H1 (cell line): ENCODE measurements at regions of chr3 and their contacts with region 1.

Region 1: DNA sequence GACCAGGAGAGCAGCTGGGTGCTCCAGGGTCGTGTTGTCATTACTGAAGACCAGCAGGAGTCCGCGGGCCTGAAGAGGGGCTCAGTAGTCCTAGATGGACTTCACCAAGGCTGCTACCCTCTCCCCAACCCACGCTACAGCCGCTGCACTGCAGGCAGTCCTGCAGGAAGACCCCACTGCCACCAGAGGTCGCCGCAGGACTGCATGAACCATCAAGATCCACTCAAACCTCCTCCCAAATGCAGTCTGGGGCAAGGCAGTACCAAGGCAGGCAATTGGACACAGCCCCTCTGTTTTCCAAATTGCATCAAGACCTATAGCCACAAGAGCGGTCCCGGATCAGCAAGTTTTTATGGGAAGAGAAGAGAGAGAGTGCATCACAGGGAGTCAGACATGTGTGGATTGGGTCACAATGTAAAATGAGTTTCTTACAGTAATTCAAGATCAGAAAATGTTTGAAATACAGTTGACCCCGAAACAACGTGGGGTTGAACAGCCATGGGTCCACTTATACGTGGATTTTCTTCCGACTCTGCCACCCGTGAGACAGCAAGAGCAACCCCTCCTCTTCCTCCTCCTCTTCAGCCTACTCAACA is 46.7 kb downstream of the DZIP1L start:
- DNase-seq: peak; percentile 64 to 89
- H3K4me3 ChIP-seq: no peak overlapping the region
- H3K27ac ChIP-seq: no peak overlapping the region
- H3K4me1 ChIP-seq: peaks cover 1 to 5% (median 3%) of the 10 kb centered on the region in 4 experiments; a peak in 3 of 7 replicates
- H3K27me3 ChIP-seq: no peaks in the 10 kb centered on the region
- CTCF ChIP-seq: peak; percentile 97 to 100 (median 99)
- EP300 ChIP-seq: no peak
- POLR2A ChIP-seq: no peak
- RAD21 ChIP-seq: peak; percentile 99 to 100

Region 2: GRCh38 chr3:138089091-138089490 is 20.4 kb after region 1 on chr3:
- CTCF ChIA-PET with region 1: interaction called, 18 read pairs
- POLR2A ChIA-PET with region 1: interaction called, 3 read pairs
- DNase-seq: no peak
- H3K4me3 ChIP-seq: no peak overlapping the region
- H3K27ac ChIP-seq: no peak overlapping the region
- H3K4me1 ChIP-seq: no peaks in the 10 kb centered on the region; a peak in 1 of 7 replicates
- H3K27me3 ChIP-seq: no peaks in the 10 kb centered on the region
- CTCF ChIP-seq: no peak
- EP300 ChIP-seq: no peak
- POLR2A ChIP-seq: no peak
- RAD21 ChIP-seq: no peak

Region 3: DNA sequence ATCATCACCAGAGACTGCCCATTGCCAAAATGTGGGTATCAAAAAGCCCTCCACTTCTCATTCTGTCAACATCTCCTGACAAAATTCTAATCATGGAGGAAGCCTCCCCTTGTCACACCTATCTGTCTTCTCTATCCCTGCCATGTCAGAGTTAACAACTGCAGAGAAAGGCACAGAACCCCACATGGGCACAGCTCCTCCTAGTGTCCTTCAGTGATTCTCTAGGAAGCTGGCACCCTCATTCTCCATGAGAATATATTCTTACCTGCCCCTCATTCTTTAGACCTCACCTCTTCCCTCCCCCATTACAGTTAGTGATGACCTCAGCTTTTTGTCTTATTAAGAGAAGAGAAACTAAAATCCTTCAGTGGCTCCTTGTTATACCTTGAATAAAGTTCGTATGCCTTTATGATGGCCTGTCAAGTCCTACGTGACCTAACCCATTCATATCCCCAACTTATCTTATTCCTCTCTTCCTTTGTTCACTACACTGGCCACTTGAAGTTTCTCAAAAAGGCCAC is 216.3 kb after region 1 on chr3:
- CTCF ChIA-PET with region 1: interaction called, 12 read pairs
- POLR2A ChIA-PET with region 1: no interaction called
- DNase-seq: peak in 1 of 2 experiments; percentile 38
- H3K4me3 ChIP-seq: no peak overlapping the region
- H3K27ac ChIP-seq: no peak overlapping the region
- H3K4me1 ChIP-seq: 0 out of 7 replicates have a peak, but pooled peaks cover 0 to 2% (median 0%) of the 10 kb centered on the region in 4 experiments
- H3K27me3 ChIP-seq: no peaks in the 10 kb centered on the region
- CTCF ChIP-seq: peak in 2 of 3 experiments; percentile 26 to 52; a peak in 2 of 4 replicates
- EP300 ChIP-seq: no peak
- POLR2A ChIP-seq: no peak
- RAD21 ChIP-seq: peak; percentile 44 to 53